B cell (primary cell): ENCODE measurements at regions of chr22 and their contacts with region 1.

Region 1: DNA sequence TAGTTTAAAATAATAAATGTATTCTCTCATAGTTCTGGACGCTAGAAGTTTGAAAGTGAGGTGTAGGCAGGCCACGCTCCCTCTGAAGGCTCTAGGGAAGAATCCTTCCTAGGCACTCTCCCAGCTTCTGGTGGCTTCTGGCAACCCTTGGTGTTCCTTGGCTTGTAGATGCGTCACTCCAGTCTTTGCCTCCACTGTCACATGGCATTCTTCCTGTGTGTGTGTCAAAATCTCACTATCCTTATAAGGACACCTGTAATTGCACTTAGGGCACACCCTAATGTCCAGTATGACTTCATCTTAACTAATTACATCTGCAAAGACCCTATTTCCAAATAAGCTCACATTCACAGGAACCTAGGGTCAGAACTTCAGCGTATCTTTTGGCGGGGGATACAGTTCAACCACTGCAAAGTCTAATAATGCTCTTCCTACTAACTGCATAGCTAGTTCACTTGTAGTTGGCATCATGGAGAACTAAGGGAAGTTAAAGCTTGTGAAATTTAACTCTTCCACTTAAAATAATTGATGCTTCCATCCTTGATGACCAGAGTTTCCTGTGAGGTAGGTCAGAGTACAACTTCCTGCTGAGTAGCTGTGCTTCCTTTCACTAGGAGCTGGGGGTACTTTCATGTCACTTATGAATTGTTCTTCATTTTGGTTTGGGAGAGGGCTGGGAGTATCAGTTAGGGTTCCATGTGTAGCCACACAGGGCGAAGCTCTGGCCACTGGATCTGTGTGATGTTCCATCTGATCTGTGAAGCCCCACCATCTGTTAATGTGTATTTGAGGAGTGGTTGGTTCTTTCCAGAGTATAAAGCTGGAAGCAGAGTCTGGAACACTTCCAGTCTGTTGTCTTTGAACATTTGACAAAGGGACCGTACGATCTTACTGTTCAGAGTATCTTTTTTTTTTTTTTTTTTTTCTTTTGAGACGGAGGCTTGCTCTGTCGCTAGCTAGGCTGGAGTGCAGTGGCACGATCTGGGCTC is 10.5 kb downstream of the YWHAH start:
- DNase-seq: no peak
- ATAC-seq: no peak
- H3K4me3 ChIP-seq: no peak overlapping the region
- H3K4me3 Mint-ChIP-seq: no peak overlapping the region
- H3K27ac ChIP-seq: no peak overlapping the region
- H3K27ac Mint-ChIP-seq: no peak overlapping the region
- H3K4me1 ChIP-seq: no peaks in the 10 kb centered on the region
- H3K4me1 Mint-ChIP-seq: peaks cover 25% of the 10 kb centered on the region
- H3K27me3 ChIP-seq: no peaks in the 10 kb centered on the region
- H3K27me3 Mint-ChIP-seq: no peaks in the 10 kb centered on the region
- CTCF ChIP-seq: no peak

Region 2: DNA sequence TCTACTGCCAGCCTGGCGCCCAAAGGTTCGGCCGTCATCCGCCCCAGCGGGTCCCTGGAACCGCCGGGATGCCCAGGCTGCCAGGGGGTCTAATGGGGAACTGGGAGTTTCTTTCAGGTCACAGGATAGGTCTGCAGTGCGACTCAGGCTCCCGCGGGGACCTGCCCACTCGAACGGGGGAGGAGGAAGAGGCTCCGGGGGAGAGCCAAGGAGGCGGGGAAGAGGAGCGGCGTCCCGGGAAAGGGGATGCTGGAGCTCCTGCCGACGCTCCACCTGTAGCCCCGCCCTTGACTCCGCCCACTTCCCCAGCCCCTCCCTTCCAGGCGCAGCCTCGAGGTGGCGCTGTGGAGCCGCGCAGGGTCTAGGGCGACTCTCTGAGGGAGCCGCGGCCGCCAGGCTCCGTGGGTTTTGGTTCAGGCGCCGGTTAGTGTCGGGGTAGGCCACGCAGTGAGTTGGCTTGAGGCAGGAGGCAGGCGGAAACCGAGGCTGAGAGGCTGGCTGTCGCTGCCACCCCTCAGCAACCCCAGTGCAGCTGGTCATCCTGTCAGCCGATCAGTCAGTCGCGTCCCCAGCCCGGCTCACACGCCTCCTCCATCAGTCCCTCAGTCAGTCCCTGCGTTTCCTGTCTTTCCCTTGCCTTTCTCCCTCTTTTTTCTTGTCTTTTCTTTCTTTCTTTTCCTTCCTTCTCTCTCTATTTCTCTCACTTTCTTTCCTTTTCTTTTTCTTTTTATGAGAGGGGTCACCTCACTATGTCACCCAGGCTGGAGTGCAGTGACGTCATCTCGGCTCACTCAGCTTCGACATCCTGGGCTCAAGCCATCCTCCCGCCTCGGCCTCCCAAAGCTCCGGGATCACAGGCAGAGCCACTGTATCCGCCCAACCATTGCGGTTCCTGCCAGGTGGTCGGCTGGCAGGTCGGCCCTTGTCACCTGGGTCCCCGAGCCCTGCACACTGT is 15.9 kb after region 1 on chr22:
- CTCF ChIA-PET with region 1: interaction called, 14 read pairs
- POLR2A ChIA-PET with region 1: no interaction called
- intact Hi-C with region 1: no loop called
- DNase-seq: peak; percentile 89
- ATAC-seq: peak; percentile 93
- H3K4me3 ChIP-seq: peak overlapping the region in 4 of 5 experiments; percentile 33 to 72 (median 48)
- H3K4me3 Mint-ChIP-seq: peak overlapping the region; percentile 88
- H3K27ac ChIP-seq: peak overlapping the region; percentile 9 to 37
- H3K27ac Mint-ChIP-seq: peak overlapping the region; percentile 41
- H3K4me1 ChIP-seq: peaks cover 16 to 21% of the 10 kb centered on the region in 2 donors
- H3K4me1 Mint-ChIP-seq: peaks cover 19% of the 10 kb centered on the region
- H3K27me3 ChIP-seq: peaks cover 0 to 4% (median 0%) of the 10 kb centered on the region in 4 experiments
- H3K27me3 Mint-ChIP-seq: peaks cover under 1% of the 10 kb centered on the region
- CTCF ChIP-seq: peak; percentile 87

Region 3: DNA sequence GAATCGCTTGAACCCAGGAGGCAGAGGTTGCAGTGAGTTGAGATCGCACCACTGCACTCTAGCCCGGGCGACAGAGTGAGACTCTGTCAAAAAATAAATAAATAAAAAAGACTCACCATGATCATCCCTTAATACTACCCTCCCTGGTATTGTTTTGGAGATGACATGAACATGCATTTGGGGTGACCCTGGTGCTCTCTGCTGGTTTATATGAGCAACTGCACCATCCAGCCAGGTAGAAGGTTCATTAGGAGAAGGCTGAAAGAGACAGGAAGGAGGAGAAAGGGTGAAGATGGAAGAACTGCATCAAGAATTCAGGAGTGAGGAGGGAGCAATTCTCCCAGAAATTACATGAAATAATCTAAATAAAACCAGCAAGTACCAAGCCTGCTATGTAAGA is 126.1 kb after region 1 on chr22:
- CTCF ChIA-PET with region 1: no interaction called
- POLR2A ChIA-PET with region 1: no interaction called
- intact Hi-C with region 1: no loop called
- DNase-seq: peak; percentile 45
- ATAC-seq: peak; percentile 28
- H3K4me3 ChIP-seq: no peak overlapping the region
- H3K4me3 Mint-ChIP-seq: no peak overlapping the region
- H3K27ac ChIP-seq: no peak overlapping the region
- H3K27ac Mint-ChIP-seq: no peak overlapping the region
- H3K4me1 ChIP-seq: no peaks in the 10 kb centered on the region
- H3K4me1 Mint-ChIP-seq: no peaks in the 10 kb centered on the region
- H3K27me3 ChIP-seq: peaks cover 0 to 3% (median 0%) of the 10 kb centered on the region in 4 experiments
- H3K27me3 Mint-ChIP-seq: peaks cover 17% of the 10 kb centered on the region
- CTCF ChIP-seq: peak; percentile 56